ENCODE measurements at regions of chr9 and their contacts with region 1.

Region 1: GRCh38 chr9:12723409-12724028 is 30.3 kb downstream of the TYRP1 start:
- DNase-seq: no peak
- ATAC-seq: no peak
- H3K4me3 ChIP-seq: no peak overlapping the region
- H3K27ac ChIP-seq: no peak overlapping the region
- H3K4me1 ChIP-seq: no peaks in the 10 kb centered on the region
- H3K27me3 ChIP-seq: no peaks in the 10 kb centered on the region

Region 2: GRCh38 chr9:12670006-12670405 is 53.5 kb before region 1 on chr9:
- intact Hi-C with region 1: no loop called
- DNase-seq: no peak
- ATAC-seq: no peak
- H3K4me3 ChIP-seq: no peak overlapping the region
- H3K27ac ChIP-seq: no peak overlapping the region
- H3K4me1 ChIP-seq: no peaks in the 10 kb centered on the region
- H3K27me3 ChIP-seq: no peaks in the 10 kb centered on the region

Region 3: DNA sequence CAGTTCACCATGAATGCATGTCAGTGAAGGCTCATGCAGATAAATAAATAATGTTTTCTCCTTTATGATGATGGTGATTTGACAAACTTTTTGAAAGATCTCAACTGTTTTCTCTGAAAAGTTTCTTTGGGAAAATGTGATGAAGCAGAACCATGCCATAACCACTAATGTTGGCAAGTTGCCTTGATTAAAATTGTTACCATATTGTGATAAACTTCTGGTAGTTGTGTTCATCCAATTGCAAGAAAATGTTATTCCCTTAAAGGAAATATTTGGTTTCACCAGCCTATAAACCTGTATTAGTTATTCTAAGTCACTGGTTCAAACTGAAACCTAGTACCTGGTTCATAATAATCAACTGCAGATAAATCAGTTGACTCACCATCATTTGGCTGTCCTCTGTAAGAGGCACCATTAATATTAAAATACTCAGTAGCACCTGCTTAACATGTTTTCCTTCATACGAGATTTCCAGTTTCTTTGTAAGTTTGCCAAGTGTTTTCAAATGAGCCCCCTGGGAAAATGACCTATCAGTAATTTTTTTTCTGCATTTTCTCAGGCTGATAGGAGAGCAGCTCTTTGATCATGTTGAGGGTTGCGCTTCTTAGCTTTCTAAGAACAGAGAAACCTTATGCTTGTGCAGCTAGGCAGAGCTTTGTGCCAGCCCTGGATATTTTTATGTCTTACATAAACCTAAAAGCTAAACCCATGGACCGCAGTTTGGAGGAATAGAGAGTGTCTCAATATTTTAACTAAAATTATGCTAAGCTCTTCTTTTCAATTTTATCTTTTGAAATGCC is 139.3 kb after region 1 on chr9:
- intact Hi-C with region 1: no loop called
- DNase-seq: no peak
- ATAC-seq: no peak
- H3K4me3 ChIP-seq: no peak overlapping the region
- H3K27ac ChIP-seq: no peak overlapping the region
- H3K4me1 ChIP-seq: no peaks in the 10 kb centered on the region
- H3K27me3 ChIP-seq: no peaks in the 10 kb centered on the region

Region 4: DNA sequence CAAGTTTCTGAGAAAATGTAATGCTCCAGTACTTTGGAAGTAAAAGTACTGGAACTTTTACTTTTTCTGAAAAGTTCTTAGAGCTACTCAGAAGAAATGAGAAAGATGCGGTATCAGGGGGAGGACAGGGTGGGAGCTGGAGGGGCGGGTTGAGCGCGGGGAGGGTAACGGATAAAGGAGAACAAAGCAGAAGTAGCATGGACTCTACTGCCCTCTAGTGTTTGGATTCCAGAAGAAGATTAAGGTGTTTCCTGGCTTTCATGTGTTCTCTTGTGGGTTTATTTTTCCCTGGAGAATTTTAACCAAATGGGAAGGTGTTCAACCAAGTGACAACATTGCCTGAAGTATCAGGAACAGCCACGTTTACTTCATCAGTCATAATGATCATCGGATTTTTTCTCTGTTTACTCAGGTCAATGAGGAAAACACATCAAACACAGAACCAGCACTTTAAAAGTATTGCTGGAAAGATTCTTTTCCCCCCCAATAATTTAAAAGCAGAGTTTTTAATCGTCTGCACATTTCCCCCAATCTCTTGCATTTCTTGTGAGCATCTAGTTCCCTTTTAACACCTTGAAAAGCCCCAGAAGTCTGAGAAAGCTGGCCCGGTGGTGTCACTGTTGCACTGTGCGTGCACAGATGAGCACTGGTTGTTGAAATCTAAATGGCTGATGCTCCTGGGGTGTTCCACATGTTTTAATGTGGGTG is 365.4 kb after region 1 on chr9:
- intact Hi-C with region 1: loop called in 3 of 4 experiments (anchors 5 to 10 kb)
- DNase-seq: peak in 2 of 3 donors; percentile 19 to 58
- ATAC-seq: peak; percentile 60 to 77
- H3K4me3 ChIP-seq: no peak overlapping the region
- H3K27ac ChIP-seq: no peak overlapping the region
- H3K4me1 ChIP-seq: no peaks in the 10 kb centered on the region
- H3K27me3 ChIP-seq: no peaks in the 10 kb centered on the region